PC-9 (cell line): ENCODE measurements at regions of chr1 and their contacts with region 1.

Region 1: DNA sequence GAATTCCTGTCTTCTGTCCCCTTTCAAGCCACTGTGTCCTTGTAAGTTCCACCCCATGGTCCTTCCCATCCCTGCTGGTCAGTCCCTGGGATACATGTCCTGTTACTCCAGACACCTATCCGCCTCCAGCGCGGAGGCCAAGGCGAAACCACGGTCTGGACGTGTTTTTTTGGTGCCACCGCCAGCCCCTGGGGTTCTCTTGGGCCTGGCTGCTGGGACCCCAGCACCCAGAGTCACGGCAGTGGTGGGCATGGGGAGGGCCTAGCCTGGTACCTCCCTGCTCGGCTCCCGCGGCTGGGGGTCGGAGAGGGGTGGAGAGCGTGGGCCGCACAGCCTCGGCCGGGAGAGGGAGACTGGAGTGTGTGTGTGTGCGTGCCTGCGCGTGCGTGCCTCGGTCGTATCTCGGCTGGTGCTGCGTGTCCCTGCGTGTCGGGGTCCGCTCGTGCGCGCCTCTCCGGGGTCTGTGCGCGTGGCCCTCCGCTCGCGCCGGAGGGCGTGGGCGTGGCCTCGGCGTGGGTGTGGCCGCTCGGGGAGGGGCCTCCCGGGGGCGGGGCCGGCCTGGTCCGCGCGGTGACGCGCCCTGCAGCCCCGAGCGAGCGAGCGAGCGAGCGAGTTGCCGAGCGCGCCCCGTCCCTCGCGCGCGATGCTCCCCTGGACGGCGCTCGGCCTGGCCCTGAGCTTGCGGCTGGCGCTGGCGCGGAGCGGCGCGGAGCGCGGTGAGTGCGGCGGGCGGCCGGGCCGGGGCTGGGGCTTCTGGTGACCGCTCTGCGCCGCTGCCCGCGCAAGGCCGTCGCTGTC is at the start of gene VWA1:
- DNase-seq: peak in 1 of 2 experiments; percentile 78
- H3K4me3 ChIP-seq: peak within 1 kb of the TSS; percentile 69
- H3K27ac ChIP-seq: no peak within 1 kb of the TSS
- H3K4me1 ChIP-seq: peaks cover 57% of the 10 kb centered on the region
- H3K27me3 ChIP-seq: no peaks in the 10 kb centered on the region
- CTCF ChIP-seq: no peak
- total RNA-seq, gene VWA1: 56.6 and 65.9 TPM in 2 replicates

Region 2: DNA sequence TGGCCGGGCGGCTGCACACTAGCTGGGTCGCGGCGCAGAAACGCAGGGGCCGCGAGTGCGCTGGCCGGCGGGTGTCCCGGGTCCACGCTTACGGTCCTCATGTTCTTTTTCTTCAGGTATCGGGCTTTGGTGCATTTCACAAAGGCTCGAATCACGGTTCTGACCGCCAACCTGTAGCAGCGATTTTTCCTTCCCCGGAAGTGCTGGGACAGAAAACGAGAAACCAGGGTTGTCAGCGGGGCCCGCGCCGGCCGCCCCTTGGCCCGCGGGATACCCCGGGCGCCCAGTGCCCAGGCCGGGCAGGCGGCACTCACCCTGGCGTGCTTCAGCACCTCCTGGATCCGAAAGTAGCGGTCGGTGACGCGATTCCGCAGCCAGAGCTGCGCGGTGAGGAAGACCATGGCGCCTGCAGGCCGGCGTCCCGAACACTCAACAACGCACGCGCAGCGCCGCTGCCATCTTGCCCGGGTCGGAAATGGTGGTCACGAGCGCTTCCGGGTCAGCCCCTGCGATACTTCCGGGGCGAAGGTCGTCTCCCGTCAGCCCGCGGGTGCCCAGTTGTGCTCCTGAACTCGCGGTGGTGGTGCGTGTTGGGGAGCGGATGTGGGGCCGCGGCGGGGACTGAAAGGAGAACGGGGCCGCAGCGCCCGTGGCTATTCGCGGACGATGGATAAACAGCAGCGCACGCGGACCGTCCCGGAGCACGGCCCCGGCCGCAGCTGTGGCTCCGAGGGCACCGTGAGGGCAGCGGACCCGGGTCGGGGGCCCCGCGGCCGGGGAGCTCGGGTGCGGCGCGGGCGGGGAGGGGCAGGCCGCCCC is 28.3 kb before region 1 on chr1 and contains the start of gene MRPL20:
- CTCF ChIA-PET with region 1: no interaction called
- POLR2A ChIA-PET with region 1: interaction called, 9 read pairs
- intact Hi-C with region 1: loop called (anchors 2 kb)
- DNase-seq: peak; percentile 78 to 85
- H3K4me3 ChIP-seq: peak within 1 kb of the TSS; percentile 80
- H3K27ac ChIP-seq: peak within 1 kb of the TSS; percentile 44
- H3K4me1 ChIP-seq: peaks cover 19% of the 10 kb centered on the region
- H3K27me3 ChIP-seq: no peaks in the 10 kb centered on the region
- CTCF ChIP-seq: no peak
- total RNA-seq, gene MRPL20: 90.5 and 90.8 TPM in 2 replicates

Region 3: DNA sequence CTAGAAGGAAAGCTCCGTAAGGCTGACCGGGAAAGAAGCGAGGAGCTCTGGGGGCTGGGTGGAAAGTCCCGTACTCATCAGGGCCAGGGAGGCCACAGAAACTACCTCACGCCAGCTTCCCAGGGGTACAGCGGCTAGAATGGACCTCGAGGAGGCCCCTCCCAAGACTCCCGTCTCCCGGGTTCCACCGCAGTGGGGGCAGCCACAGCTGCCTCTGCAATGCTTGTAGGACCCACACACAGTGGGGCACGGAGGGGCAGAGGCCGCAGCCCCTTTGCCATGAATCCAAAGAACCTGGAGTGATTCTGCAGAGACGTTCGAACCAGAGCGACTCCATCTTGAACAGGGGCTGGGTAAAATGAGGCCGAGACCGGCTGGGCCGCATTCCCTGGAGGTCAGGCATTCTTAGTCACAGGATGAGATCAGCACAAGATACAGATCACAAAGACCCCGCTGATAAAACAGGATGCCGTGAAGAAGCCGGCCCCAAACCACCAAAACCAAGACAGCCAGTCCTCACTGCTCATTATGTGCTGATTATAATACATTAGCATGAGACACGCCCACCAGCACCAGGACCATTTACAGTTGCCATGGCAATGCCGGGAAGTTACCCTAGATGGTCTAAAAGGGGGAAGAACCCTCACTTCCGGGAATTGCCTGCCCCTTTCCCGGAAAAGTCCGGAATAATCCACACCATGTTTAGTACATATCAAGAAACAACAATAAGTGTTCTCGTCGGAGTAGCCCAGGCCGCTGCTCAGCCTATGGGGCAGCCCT is 12.7 kb before region 1 on chr1:
- CTCF ChIA-PET with region 1: interaction called, 3 read pairs
- POLR2A ChIA-PET with region 1: interaction called, 4 read pairs
- intact Hi-C with region 1: loop called (anchors 1 kb)
- DNase-seq: peak; percentile 74 to 78
- H3K4me3 ChIP-seq: no peak overlapping the region
- H3K27ac ChIP-seq: peak overlapping the region; percentile 30
- H3K4me1 ChIP-seq: peaks cover 18% of the 10 kb centered on the region
- H3K27me3 ChIP-seq: no peaks in the 10 kb centered on the region
- CTCF ChIP-seq: no peak